ENCODE measurements at regions of chr17 and their contacts with region 1.

Region 1: DNA sequence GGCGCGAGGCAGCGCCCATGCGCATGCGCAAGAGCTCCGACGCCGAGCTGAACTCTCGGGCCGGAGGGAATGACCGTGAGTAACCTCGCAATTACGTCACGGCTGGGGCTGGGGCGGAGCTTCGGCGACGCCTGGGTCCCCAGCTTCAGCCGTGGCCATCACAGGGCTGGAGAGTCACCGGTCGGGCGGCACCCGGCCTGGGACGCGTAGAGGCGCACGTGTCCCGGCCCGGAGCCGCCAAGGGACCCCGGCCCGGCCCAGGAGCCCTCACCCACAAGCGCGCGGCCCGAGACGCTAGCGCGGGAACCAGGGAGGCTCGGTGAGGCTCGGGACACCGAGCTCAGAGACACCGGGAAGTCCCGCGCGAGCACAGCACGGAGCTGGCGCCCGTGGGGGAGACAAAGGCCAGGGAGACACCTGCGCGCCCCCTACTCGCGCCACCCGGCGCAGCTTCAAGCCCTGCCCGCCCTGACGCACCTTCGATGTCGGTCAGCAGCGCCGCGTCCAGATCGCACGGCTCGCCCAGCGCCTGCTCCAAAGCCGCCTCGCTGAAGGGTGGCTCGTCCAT is 452 bp downstream of the SREBF1 start:
- DNase-seq: peak; percentile 98
- ATAC-seq: peak; percentile 77
- H3K4me3 Mint-ChIP-seq: peak overlapping the region; percentile 85
- H3K27ac Mint-ChIP-seq: peak overlapping the region; percentile 95
- H3K4me1 Mint-ChIP-seq: peaks cover 71% of the 10 kb centered on the region
- H3K27me3 Mint-ChIP-seq: no peaks in the 10 kb centered on the region

Region 2: GRCh38 chr17:17823433-17824118 is 12.8 kb before region 1 on chr17:
- CTCF ChIA-PET with region 1: interaction called, 34 read pairs
- DNase-seq: peak; percentile 91
- ATAC-seq: peak; percentile 92
- H3K4me3 Mint-ChIP-seq: peak overlapping the region; percentile 76
- H3K27ac Mint-ChIP-seq: peak overlapping the region; percentile 92
- H3K4me1 Mint-ChIP-seq: peaks cover 89% of the 10 kb centered on the region
- H3K27me3 Mint-ChIP-seq: no peaks in the 10 kb centered on the region

Region 3: GRCh38 chr17:17849845-17850373 is 13.6 kb after region 1 on chr17:
- CTCF ChIA-PET with region 1: interaction called, 20 read pairs
- DNase-seq: peak; percentile 92
- ATAC-seq: peak; percentile 55
- H3K4me3 Mint-ChIP-seq: no peak overlapping the region
- H3K27ac Mint-ChIP-seq: peak overlapping the region; percentile 94
- H3K4me1 Mint-ChIP-seq: peaks cover 75% of the 10 kb centered on the region
- H3K27me3 Mint-ChIP-seq: no peaks in the 10 kb centered on the region

Region 4: DNA sequence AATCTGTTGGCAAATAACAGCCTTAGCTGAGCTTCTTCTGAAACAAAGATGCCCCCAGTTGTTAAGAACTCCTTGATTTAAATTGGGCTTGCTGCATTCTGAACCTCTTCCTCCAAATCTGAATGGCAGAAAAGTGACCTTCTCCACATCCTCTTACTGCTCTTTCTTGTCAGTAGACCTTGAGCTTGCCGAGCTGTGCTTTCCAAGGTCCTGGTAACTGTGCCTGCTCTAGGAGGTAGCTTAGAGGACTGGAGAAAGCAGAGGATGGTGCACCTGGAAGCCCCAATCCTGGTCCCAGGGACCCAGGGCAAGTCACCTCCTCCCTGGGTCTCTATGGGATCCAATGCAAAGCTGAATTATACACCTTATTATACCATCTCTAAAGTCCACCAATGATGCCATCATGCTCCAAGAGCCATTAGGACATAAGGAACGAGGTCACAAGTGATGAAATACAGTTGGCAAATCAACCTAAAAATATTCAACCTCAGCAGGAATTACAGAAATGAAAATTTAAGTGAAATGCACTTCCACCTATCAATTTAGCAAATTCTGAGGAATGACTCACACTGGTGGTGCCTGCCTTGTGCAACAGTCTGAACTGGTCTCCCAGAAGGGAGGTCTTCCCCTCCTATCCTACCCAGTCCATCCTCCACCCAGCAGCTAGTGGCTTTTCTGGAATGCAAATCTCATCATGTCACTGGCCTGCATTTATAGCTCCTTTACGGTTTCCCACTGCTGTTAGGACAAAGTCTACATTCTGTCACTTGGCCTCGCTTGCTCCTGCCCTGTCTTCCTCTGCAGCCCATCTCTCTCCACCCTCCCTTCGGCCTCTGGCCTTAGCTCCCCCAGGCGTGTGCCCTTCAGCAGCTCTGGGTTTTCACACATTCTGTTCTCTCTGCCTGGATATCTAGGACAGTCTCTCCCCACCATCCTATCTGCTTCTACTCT is 99.3 kb after region 1 on chr17:
- CTCF ChIA-PET with region 1: no interaction called
- DNase-seq: no peak
- ATAC-seq: peak; percentile 53
- H3K4me3 Mint-ChIP-seq: no peak overlapping the region
- H3K27ac Mint-ChIP-seq: no peak overlapping the region
- H3K4me1 Mint-ChIP-seq: peaks cover 25% of the 10 kb centered on the region
- H3K27me3 Mint-ChIP-seq: no peaks in the 10 kb centered on the region

Measured in activated CD8-positive, alpha-beta memory T cell treated with anti-CD3 and anti-CD28 coated beads, Interleukin-2, amount 10 ng/mL, durations not matched to agents 7 days and 5 days (primary cell).